HEK293T (cell line): ENCODE measurements at regions of chr22 and their contacts with region 1.

Region 1: GRCh38 chr22:20116951-20117645 is at the start of gene TRMT2A:
- DNase-seq: peak; percentile 99

Region 2: GRCh38 chr22:20130739-20131596 is 13.9 kb after region 1 on chr22:
- CTCF ChIA-PET with region 1: interaction called, 4 read pairs
- POLR2A ChIA-PET with region 1: interaction called, 51 read pairs
- DNase-seq: peak; percentile 83

Region 3: GRCh38 chr22:20205964-20206708 is 89.0 kb after region 1 on chr22:
- CTCF ChIA-PET with region 1: no interaction called
- POLR2A ChIA-PET with region 1: no interaction called
- DNase-seq: peak; percentile 69